Activated B cell treated with CpG ODN at 0.5 μM for 24 hours (primary cell): ENCODE measurements at regions of chrX and their contacts with region 1.

Region 1: DNA sequence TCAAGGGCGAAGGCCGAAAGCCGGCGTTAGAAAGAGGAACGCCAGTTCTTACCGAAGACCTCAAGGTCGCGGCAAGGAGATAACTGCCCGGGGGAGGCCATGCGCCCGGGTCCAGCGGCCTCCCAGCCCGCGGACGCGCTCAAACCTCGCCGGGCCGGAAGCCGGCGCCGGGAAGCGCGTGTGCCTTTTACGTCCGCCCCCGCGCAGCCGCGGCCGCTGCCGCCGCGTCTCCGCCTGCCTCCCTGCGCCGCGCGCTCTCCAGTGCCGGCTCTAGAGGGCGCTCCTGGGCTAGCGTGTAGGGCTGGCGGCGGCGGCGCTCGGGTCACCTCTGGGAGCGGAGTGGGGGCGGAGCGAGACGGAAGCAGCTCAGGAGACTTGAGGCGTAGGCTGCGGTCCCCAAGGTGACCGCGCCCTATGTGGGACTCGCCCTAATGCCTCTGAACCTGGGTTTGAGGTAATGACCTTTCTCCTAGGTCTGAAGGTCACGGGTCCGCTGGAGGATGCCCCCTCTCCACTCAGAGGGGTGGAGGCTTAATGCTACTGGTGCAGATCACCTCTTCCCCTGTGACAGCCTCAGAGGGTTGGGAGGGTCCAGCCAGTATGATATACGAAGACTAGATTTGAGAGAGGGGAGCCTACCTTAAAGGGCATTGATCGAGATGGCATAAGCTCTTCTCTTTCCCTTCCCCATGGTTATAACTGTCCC is 839 bp downstream of the SLC25A5 start:
- DNase-seq: peak; percentile 82
- ATAC-seq: peak; percentile 76
- H3K4me3 Mint-ChIP-seq: peak overlapping the region; percentile 86
- H3K27ac Mint-ChIP-seq: peak overlapping the region; percentile 88
- H3K4me1 Mint-ChIP-seq: peaks cover 6% of the 10 kb centered on the region
- H3K27me3 Mint-ChIP-seq: no peaks in the 10 kb centered on the region
- CTCF ChIP-seq: no peak

Region 2: GRCh38 chrX:119145241-119145653 is 323.8 kb before region 1 on chrX:
- CTCF ChIA-PET with region 1: no interaction called
- POLR2A ChIA-PET with region 1: no interaction called
- intact Hi-C with region 1: no loop called
- DNase-seq: no peak
- ATAC-seq: no peak
- H3K4me3 Mint-ChIP-seq: no peak overlapping the region
- H3K27ac Mint-ChIP-seq: no peak overlapping the region
- H3K4me1 Mint-ChIP-seq: no peaks in the 10 kb centered on the region
- H3K27me3 Mint-ChIP-seq: peaks cover 3% of the 10 kb centered on the region
- CTCF ChIP-seq: no peak

Region 3: DNA sequence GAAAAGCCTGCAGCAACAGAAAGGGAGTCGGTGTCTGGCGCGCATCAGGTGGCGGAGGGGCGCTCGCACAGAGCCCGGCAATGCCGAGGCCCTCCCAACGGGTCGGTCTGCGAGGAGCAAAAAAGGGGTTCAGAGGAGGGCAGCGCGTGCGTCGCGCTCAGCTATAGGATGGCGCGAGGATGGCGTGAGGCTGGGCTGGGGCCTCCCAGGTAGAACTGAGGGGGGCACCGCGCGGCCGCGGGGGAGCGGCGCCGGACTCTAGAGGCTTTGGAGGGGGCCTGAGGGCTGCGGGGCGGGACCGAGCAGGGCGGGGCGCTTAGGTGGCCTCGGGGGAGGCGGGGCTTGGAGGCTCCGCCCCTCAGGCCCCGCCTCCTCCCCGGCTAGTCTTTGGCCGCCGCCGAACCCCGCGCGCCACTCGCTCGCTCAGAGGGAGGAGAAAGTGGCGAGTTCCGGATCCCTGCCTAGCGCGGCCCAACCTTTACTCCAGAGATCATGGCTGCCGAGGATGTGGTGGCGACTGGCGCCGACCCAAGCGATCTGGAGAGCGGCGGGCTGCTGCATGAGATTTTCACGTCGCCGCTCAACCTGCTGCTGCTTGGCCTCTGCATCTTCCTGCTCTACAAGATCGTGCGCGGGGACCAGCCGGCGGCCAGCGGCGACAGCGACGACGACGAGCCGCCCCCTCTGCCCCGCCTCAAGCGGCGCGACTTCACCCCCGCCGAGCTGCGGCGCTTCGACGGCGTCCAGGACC is 233.0 kb before region 1 on chrX and contains the start of gene PGRMC1:
- CTCF ChIA-PET with region 1: no interaction called
- POLR2A ChIA-PET with region 1: no interaction called
- intact Hi-C with region 1: loop called (anchors 2 kb)
- DNase-seq: peak; percentile 64
- ATAC-seq: peak; percentile 97
- H3K4me3 Mint-ChIP-seq: peak within 1 kb of the TSS; percentile 89
- H3K27ac Mint-ChIP-seq: peak within 1 kb of the TSS; percentile 82
- H3K4me1 Mint-ChIP-seq: peaks cover 16% of the 10 kb centered on the region
- H3K27me3 Mint-ChIP-seq: no peaks in the 10 kb centered on the region
- CTCF ChIP-seq: no peak
- total RNA-seq, gene PGRMC1: 8.5 and 9.8 TPM in 2 replicates

Region 4: GRCh38 chrX:119427024-119427794 is 41.9 kb before region 1 on chrX:
- CTCF ChIA-PET with region 1: interaction called, 3 read pairs
- POLR2A ChIA-PET with region 1: interaction called, 23 read pairs
- intact Hi-C with region 1: loop called (anchors 5 kb)
- DNase-seq: peak; percentile 15
- ATAC-seq: peak; percentile 93
- H3K4me3 Mint-ChIP-seq: peak overlapping the region; percentile 64
- H3K27ac Mint-ChIP-seq: peak overlapping the region; percentile 92
- H3K4me1 Mint-ChIP-seq: peaks cover 31% of the 10 kb centered on the region
- H3K27me3 Mint-ChIP-seq: no peaks in the 10 kb centered on the region
- CTCF ChIP-seq: no peak

Region 5: DNA sequence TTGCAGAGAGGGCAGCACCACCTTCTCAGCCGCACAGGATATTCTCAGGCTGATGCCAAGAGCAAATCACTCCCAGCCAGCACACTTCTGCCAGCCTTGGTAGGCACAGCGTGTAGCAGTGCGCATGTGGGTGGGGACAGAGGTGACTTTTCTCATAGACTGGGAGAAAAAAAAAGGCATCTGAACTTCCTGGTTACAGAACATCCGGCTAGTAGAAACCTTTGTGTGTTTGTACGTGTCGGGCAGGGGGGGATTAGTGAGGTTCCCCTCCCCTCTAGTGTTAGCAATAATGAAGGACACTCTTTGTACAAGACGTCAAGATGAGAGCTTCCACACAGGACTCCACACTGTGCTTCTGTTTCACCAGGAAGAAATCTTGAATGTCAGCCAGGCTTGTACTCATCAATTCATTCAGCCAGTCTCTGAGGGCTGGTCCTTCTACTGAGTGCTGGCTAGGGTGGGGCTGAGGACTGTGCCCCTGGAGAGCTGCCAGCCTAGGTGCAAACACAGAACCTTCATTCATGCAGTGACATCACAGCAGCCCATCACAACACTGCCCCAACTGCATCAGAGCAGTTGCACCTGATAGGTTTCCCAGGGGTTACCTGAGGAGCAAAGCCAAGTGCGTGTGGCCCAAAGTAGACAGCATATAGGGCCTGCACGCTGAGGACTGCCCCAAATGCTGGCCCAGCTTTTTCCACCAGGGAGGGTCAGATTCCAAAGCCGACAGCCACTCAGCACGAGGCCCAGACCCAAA is 33.8 kb after region 1 on chrX:
- CTCF ChIA-PET with region 1: no interaction called
- POLR2A ChIA-PET with region 1: no interaction called
- intact Hi-C with region 1: loop called (anchors 5 kb)
- DNase-seq: no peak
- ATAC-seq: no peak
- H3K4me3 Mint-ChIP-seq: no peak overlapping the region
- H3K27ac Mint-ChIP-seq: no peak overlapping the region
- H3K4me1 Mint-ChIP-seq: peaks cover 13% of the 10 kb centered on the region
- H3K27me3 Mint-ChIP-seq: no peaks in the 10 kb centered on the region
- CTCF ChIP-seq: no peak

Region 6: GRCh38 chrX:119693040-119693995 is 224.2 kb after region 1 on chrX and contains the start of gene SEPTIN6:
- CTCF ChIA-PET with region 1: no interaction called
- POLR2A ChIA-PET with region 1: interaction called, 3 read pairs
- intact Hi-C with region 1: loop called (anchors 5 kb)
- DNase-seq: peak; percentile 70
- ATAC-seq: peak; percentile 71
- H3K4me3 Mint-ChIP-seq: peak within 1 kb of the TSS; percentile 97
- H3K27ac Mint-ChIP-seq: peak within 1 kb of the TSS; percentile 94
- H3K4me1 Mint-ChIP-seq: peaks cover 71% of the 10 kb centered on the region
- H3K27me3 Mint-ChIP-seq: no peaks in the 10 kb centered on the region
- CTCF ChIP-seq: no peak
- total RNA-seq, gene SEPTIN6: 330 and 338 TPM in 2 replicates

Region 7: DNA sequence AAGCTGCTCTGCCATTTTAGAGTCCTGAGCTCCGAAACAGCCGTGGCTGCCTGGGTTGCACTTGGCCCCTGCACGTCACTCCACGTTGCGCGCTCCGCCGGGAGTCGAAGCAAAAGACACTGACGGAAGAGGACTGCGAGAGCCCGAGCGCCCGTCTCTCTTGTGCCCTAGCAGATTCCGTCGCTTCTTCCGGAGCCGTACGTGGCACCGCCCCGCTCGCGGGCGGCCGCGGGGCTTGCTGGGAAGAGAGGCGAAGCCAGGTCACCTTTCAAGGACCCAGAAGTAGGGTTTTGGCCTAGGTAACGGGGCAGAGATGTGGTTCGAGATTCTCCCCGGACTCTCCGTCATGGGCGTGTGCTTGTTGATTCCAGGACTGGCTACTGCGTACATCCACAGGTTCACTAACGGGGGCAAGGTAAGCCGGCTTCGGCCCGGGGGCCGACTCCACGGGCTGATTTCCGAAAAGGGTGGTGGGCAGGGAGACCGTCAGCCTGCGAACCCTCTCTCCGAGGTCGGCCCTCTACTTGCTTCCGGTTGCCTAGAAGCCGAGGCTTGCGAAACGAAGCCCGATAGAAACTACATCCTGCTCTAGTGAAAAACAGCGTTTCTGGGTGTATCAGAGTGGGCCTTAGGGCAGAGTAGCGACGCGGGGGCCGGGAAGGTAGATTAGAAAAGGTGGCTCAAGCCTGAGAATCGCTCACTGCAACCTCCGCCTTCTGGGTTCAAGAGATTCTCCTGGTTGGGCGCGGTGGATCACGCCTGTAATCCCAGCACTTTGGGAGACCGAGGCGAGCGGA is 402.7 kb after region 1 on chrX and contains the starts of genes NDUFA1 and RNF113A:
- CTCF ChIA-PET with region 1: no interaction called
- POLR2A ChIA-PET with region 1: interaction called, 5 read pairs
- intact Hi-C with region 1: loop called (anchors 5 kb)
- DNase-seq: peak; percentile 75
- ATAC-seq: peak; percentile 92
- H3K4me3 Mint-ChIP-seq: peak within 1 kb of the TSS; percentile 96
- H3K27ac Mint-ChIP-seq: peak within 1 kb of the TSS; percentile 98
- H3K4me1 Mint-ChIP-seq: peaks cover 23% of the 10 kb centered on the region
- H3K27me3 Mint-ChIP-seq: no peaks in the 10 kb centered on the region
- CTCF ChIP-seq: no peak
- total RNA-seq, gene NDUFA1: 65.3 and 88.0 TPM in 2 replicates
- total RNA-seq, gene RNF113A: 27.1 and 28.1 TPM in 2 replicates

Region 8: DNA sequence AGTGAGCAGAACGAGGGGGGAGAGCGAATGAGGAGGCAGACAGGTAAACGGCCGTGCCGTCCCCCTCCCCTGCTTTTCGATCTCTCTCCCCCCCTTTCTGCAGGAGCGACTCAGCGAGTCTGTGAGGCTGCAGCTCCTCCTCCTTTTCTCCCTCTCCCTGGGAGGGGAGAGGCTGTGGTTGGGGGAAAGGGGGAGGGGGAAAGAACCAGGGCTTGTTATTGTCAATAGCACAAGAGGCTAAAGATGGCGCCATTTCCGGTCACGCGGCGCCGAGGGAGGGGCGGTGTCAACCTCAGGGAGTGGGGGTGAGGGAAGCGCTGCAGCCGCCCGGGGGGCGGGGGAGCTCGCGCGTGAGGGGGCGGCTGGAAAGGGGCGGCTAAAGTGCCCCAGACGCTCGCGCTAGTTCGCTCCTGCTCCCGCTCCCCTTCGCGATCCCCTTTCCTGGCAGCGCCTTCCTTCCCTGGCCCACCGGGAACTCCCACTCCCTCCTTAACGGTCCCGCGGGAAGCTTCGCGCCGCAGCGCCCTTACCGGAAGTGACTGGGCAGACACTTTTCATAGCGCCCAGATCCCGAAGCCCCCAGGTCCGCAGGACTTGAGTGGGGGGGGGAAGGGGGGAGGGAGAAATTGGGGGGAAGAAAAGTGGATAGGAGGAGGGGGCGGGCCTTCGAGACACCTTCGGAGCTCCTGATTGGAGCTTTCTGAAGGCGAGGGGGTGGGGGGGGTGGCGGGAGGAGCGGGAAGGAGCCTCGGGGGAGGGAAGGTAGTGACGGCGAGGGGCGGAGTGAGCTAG is 1092.0 kb after region 1 on chrX and contains the start of gene CUL4B:
- CTCF ChIA-PET with region 1: no interaction called
- POLR2A ChIA-PET with region 1: no interaction called
- intact Hi-C with region 1: loop called (anchors 2 kb)
- DNase-seq: peak; percentile 78
- ATAC-seq: peak; percentile 87
- H3K4me3 Mint-ChIP-seq: peak within 1 kb of the TSS; percentile 93
- H3K27ac Mint-ChIP-seq: peak within 1 kb of the TSS; percentile 96
- H3K4me1 Mint-ChIP-seq: peaks cover 36% of the 10 kb centered on the region
- H3K27me3 Mint-ChIP-seq: no peaks in the 10 kb centered on the region
- CTCF ChIP-seq: no peak
- total RNA-seq, gene CUL4B: 35.0 and 35.9 TPM in 2 replicates